Right cardiac atrium (tissue), 5 donors: ENCODE measurements at regions of chr9 and their contacts with region 1.

Region 1: GRCh38 chr9:97737429-97737828 is 40.3 kb upstream of the XPA start:
- DNase-seq: no peak
- ATAC-seq: no peak
- H3K4me3 ChIP-seq: no peak overlapping the region
- H3K27ac ChIP-seq: no peak overlapping the region
- H3K4me1 ChIP-seq: no peaks in the 10 kb centered on the region
- H3K27me3 ChIP-seq: no peaks in the 10 kb centered on the region

Region 2: GRCh38 chr9:97786341-97786740 is 48.9 kb after region 1 on chr9:
- intact Hi-C with region 1: loop called in 1 of 4 experiments (anchors 10 kb)
- DNase-seq: no peak
- ATAC-seq: no peak
- H3K4me3 ChIP-seq: no peak overlapping the region
- H3K27ac ChIP-seq: no peak overlapping the region
- H3K4me1 ChIP-seq: no peaks in the 10 kb centered on the region
- H3K27me3 ChIP-seq: peaks cover 2% of the 10 kb centered on the region

Region 3: GRCh38 chr9:98326459-98327248 is 589.2 kb after region 1 on chr9:
- intact Hi-C with region 1: no loop called
- DNase-seq: no peak
- ATAC-seq: no peak
- H3K4me3 ChIP-seq: no peak overlapping the region
- H3K27ac ChIP-seq: no peak overlapping the region
- H3K4me1 ChIP-seq: peaks cover 4% of the 10 kb centered on the region
- H3K27me3 ChIP-seq: no peaks in the 10 kb centered on the region